Gastrocnemius medialis (tissue), 4 donors: ENCODE measurements at regions of chr2 and their contacts with region 1.

Region 1: GRCh38 chr2:66434679-66435548 is at the start of gene MEIS1:
- DNase-seq: peak; percentile 91
- ATAC-seq: peak; percentile 82 to 83
- H3K4me3 ChIP-seq: peak within 1 kb of the TSS; percentile 80 to 96 (median 88)
- H3K27ac ChIP-seq: peak within 1 kb of the TSS; percentile 83 to 89 (median 87)
- H3K4me1 ChIP-seq: peaks cover 0 to 18% of the 10 kb centered on the region in 2 donors
- H3K27me3 ChIP-seq: no peaks in the 10 kb centered on the region
- CTCF ChIP-seq: no peak
- POLR2A ChIP-seq: peak; percentile 69 to 81
- total RNA-seq, gene MEIS1: 1.3 to 8.2 (median 2.0) TPM

Region 2: DNA sequence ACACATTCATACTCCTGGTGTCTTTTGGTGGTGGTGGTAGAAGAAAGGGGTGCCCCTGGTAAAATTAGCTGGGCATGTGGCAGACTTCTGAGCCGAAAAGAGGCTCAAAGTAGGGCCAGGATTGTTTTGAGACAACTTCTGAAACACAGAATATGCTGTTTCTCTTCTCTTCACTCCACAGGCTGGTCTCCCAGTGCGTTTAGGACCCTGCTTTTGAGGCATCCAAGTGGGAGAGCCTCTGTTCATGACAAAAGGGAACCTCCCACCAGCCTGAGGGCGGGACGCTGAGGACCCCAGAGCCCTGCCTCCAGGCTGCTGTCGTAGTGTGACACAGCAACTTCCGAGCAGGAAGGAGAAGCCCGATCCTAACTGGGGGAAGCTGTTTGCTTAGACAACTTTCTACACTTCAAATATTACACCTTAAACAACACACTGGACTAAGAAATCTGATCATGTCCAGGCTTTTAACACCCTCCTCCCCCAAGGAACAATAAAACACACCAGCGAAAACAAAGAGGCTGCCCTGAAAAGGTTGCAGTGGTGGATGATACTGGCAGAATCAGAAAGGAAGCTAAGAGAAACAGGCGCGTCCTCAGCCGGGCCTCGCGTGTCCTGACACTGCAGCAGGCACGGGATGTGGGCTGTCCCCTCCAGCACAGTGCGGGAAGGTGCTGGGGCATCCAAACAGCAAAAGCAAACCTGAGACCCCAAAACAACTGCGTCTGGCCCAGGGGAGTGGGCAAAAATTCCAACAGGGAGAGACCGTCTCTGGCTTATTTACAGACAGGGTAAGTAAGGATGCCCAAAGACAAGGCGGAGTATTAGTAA is 1790.5 kb before region 1 on chr2:
- in situ Hi-C with region 1: no loop called
- intact Hi-C with region 1: loop called (anchors 10 kb)
- DNase-seq: peak; percentile 62 to 70
- ATAC-seq: peak; percentile 76 to 81
- H3K4me3 ChIP-seq: peak overlapping the region; percentile 49 to 61 (median 58)
- H3K27ac ChIP-seq: peak overlapping the region; percentile 85 to 93 (median 92)
- H3K4me1 ChIP-seq: peaks cover 54 to 58% of the 10 kb centered on the region in 2 donors
- H3K27me3 ChIP-seq: no peaks in the 10 kb centered on the region
- CTCF ChIP-seq: no peak
- POLR2A ChIP-seq: peak; percentile 67 to 82

Region 3: GRCh38 chr2:66228128-66228547 is 206.8 kb before region 1 on chr2:
- in situ Hi-C with region 1: no loop called
- intact Hi-C with region 1: no loop called
- DNase-seq: peak in 1 of 2 donors; percentile 64
- ATAC-seq: peak; percentile 75 to 85
- H3K4me3 ChIP-seq: no peak overlapping the region
- H3K27ac ChIP-seq: no peak overlapping the region
- H3K4me1 ChIP-seq: no peaks in the 10 kb centered on the region
- H3K27me3 ChIP-seq: no peaks in the 10 kb centered on the region
- CTCF ChIP-seq: no peak
- POLR2A ChIP-seq: no peak

Region 4: GRCh38 chr2:66581339-66582103 is 146.6 kb after region 1 on chr2:
- in situ Hi-C with region 1: loop called in 2 of 4 experiments (anchors 5 kb)
- intact Hi-C with region 1: no loop called
- DNase-seq: no peak
- ATAC-seq: no peak
- H3K4me3 ChIP-seq: peak overlapping the region in 1 of 4 donors; percentile 14
- H3K27ac ChIP-seq: no peak overlapping the region
- H3K4me1 ChIP-seq: peaks cover 8 to 10% of the 10 kb centered on the region in 2 donors
- H3K27me3 ChIP-seq: peaks cover 91 to 99% (median 98%) of the 10 kb centered on the region in 3 donors
- CTCF ChIP-seq: no peak
- POLR2A ChIP-seq: no peak

Region 5: DNA sequence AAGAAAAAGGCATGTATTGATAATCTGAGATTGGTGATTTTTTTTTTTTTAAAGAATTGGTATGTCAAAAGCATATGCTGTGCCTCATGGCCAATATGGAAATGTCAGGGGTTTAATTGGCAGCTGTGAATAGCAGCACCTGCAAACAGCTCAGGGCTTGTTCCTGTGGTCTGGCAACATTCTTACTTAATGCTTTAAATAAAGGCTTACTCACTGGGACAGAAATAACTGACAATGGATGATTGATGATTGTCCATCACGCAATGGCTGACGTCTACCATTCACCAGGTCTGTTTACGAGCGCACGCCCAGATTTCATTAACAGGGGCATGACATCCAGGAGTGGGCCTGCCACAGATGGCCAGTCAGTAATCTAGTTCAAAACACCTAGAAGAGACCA is 1028.9 kb after region 1 on chr2:
- in situ Hi-C with region 1: no loop called
- intact Hi-C with region 1: loop called (anchors 10 kb)
- DNase-seq: peak; percentile 15 to 41
- ATAC-seq: peak; percentile 97
- H3K4me3 ChIP-seq: no peak overlapping the region
- H3K27ac ChIP-seq: peak overlapping the region in 2 of 4 donors; percentile 46 to 67
- H3K4me1 ChIP-seq: peaks cover 5 to 11% of the 10 kb centered on the region in 2 donors
- H3K27me3 ChIP-seq: no peaks in the 10 kb centered on the region
- CTCF ChIP-seq: no peak
- POLR2A ChIP-seq: peak in 1 of 2 donors; percentile 16

Region 6: GRCh38 chr2:67671464-67672450 is 1236.8 kb after region 1 on chr2:
- in situ Hi-C with region 1: no loop called
- intact Hi-C with region 1: loop called (anchors 2 kb)
- DNase-seq: no peak
- ATAC-seq: no peak
- H3K4me3 ChIP-seq: no peak overlapping the region
- H3K27ac ChIP-seq: peak overlapping the region; percentile 24 to 80 (median 66)
- H3K4me1 ChIP-seq: peaks cover 33 to 58% of the 10 kb centered on the region in 2 donors
- H3K27me3 ChIP-seq: no peaks in the 10 kb centered on the region
- CTCF ChIP-seq: no peak
- POLR2A ChIP-seq: no peak

Region 7: DNA sequence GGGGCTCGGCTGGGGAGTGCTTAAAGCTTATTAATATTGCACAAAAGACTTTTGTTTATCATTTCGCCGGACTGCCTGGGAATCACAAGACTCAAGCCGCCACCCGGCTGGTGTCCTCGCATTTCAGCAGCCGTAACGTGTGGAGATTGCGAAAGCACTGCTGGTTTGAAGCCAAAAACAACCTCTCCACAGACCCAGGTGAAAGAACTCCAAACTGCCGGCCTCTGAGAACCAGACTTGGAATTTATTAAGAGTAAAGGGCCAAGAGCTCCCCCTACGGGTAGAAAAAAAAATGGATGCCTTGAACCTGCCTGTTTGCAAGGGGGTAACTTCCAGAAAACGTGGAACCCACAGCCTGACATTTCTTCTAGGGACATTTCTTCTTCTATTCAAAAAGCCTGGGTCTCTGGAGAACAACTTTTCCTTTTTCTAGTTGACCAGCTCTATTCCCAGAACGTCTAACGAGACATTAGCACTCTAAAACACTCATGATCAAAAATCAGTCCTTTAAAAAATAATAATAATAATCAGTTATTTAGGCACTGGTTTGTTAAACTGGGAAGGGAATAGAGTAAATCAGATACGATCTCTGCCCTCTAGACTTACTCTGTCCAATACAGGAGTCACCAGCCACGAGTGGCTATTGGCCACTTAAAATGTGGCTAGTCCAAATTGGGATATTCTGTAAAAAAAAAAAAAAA is 1411.6 kb after region 1 on chr2:
- in situ Hi-C with region 1: loop called in 2 of 4 experiments (anchors 10 kb)
- intact Hi-C with region 1: loop called (anchors 1 kb)
- DNase-seq: peak; percentile 64 to 82
- ATAC-seq: peak; percentile 90 to 98
- H3K4me3 ChIP-seq: peak overlapping the region; percentile 8 to 28 (median 14)
- H3K27ac ChIP-seq: no peak overlapping the region
- H3K4me1 ChIP-seq: peaks cover 6 to 7% of the 10 kb centered on the region in 2 donors
- H3K27me3 ChIP-seq: no peaks in the 10 kb centered on the region
- CTCF ChIP-seq: peak; percentile 59 to 78 (median 62)
- POLR2A ChIP-seq: no peak

Region 8: DNA sequence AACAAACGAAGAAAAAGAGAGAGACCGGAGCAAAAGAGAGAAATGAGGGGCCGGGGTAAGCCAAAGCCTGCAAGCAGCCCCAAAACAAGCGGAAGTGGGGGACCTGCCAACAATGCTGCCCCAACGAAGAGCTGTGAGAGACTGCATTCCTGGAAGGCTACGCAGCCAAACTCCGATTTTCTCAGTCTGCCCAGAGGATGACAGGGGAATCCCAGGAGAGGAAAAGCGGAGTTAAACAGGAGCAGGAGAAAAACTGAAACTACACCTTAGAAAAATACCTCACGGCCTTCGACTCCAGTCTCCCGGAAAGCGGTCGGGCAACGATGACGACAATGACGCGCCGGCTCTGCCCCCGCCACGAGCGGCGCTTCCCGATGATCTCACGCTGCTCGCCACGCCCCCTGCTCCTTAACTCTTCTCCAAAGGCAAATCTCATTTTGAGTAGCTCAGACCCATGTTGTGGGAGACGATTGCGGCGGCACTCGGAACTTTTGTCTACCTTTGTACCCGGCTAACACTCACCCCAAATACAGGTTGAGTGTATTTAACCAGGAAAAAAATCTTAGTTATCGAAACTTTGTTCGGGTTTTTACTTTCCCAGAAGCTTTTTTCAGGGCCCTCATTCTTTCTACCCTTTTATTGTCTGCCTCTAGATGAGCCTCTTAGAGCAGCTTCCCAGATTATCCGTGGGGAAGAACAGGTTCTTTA is 1627.9 kb after region 1 on chr2 and contains the start of gene C1D:
- in situ Hi-C with region 1: no loop called
- intact Hi-C with region 1: loop called (anchors 10 kb)
- DNase-seq: peak; percentile 84 to 90
- ATAC-seq: peak; percentile 99
- H3K4me3 ChIP-seq: peak within 1 kb of the TSS; percentile 60 to 88 (median 82)
- H3K27ac ChIP-seq: peak within 1 kb of the TSS; percentile 82 to 92 (median 90)
- H3K4me1 ChIP-seq: peaks cover 38 to 50% of the 10 kb centered on the region in 2 donors
- H3K27me3 ChIP-seq: no peaks in the 10 kb centered on the region
- CTCF ChIP-seq: no peak
- POLR2A ChIP-seq: peak; percentile 46 to 48
- total RNA-seq, gene C1D: 29.7 to 57.3 (median 41.4) TPM